CD4-positive, alpha-beta T cell (primary cell): ENCODE measurements at regions of chr12 and their contacts with region 1.

Region 1: GRCh38 chr12:122190842-122191668 is 8.1 kb downstream of the LRRC43 start:
- DNase-seq: peak; percentile 34 to 75 (median 56)
- ATAC-seq: peak; percentile 97
- H3K4me3 ChIP-seq: no peak overlapping the region
- H3K4me3 Mint-ChIP-seq: no peak overlapping the region
- H3K27ac ChIP-seq: no peak overlapping the region
- H3K27ac Mint-ChIP-seq: no peak overlapping the region
- H3K4me1 ChIP-seq: peaks cover 5% of the 10 kb centered on the region
- H3K4me1 Mint-ChIP-seq: no peaks in the 10 kb centered on the region
- H3K27me3 ChIP-seq: no peaks in the 10 kb centered on the region
- H3K27me3 Mint-ChIP-seq: peaks cover 5% of the 10 kb centered on the region
- CTCF ChIP-seq: peak; percentile 68

Region 2: GRCh38 chr12:121917979-121918678 is 272.9 kb before region 1 on chr12 and contains the start of gene CFAP251:
- CTCF ChIA-PET with region 1: interaction called, 3 read pairs
- POLR2A ChIA-PET with region 1: no interaction called
- intact Hi-C with region 1: loop called (anchors 2 to 5 kb)
- DNase-seq: peak; percentile 87 to 98 (median 95)
- ATAC-seq: peak; percentile 99
- H3K4me3 ChIP-seq: peak within 1 kb of the TSS; percentile 51
- H3K4me3 Mint-ChIP-seq: peak within 1 kb of the TSS; percentile 52
- H3K27ac ChIP-seq: peak within 1 kb of the TSS; percentile 48 to 69
- H3K27ac Mint-ChIP-seq: peak within 1 kb of the TSS; percentile 80
- H3K4me1 ChIP-seq: peaks cover 14% of the 10 kb centered on the region
- H3K4me1 Mint-ChIP-seq: peaks cover 8% of the 10 kb centered on the region
- H3K27me3 ChIP-seq: no peaks in the 10 kb centered on the region
- H3K27me3 Mint-ChIP-seq: no peaks in the 10 kb centered on the region
- CTCF ChIP-seq: peak; percentile 91
- total RNA-seq, gene CFAP251: 0.28 to 0.33 TPM

Region 3: GRCh38 chr12:122051231-122051876 is 139.7 kb before region 1 on chr12:
- CTCF ChIA-PET with region 1: interaction called, 10 read pairs
- POLR2A ChIA-PET with region 1: interaction called, 3 read pairs
- intact Hi-C with region 1: loop called (anchors 1 kb)
- DNase-seq: no peak
- ATAC-seq: no peak
- H3K4me3 ChIP-seq: no peak overlapping the region
- H3K4me3 Mint-ChIP-seq: no peak overlapping the region
- H3K27ac ChIP-seq: no peak overlapping the region
- H3K27ac Mint-ChIP-seq: no peak overlapping the region
- H3K4me1 ChIP-seq: peaks cover 9% of the 10 kb centered on the region
- H3K4me1 Mint-ChIP-seq: peaks cover 4% of the 10 kb centered on the region
- H3K27me3 ChIP-seq: no peaks in the 10 kb centered on the region
- H3K27me3 Mint-ChIP-seq: no peaks in the 10 kb centered on the region
- CTCF ChIP-seq: no peak

Region 4: DNA sequence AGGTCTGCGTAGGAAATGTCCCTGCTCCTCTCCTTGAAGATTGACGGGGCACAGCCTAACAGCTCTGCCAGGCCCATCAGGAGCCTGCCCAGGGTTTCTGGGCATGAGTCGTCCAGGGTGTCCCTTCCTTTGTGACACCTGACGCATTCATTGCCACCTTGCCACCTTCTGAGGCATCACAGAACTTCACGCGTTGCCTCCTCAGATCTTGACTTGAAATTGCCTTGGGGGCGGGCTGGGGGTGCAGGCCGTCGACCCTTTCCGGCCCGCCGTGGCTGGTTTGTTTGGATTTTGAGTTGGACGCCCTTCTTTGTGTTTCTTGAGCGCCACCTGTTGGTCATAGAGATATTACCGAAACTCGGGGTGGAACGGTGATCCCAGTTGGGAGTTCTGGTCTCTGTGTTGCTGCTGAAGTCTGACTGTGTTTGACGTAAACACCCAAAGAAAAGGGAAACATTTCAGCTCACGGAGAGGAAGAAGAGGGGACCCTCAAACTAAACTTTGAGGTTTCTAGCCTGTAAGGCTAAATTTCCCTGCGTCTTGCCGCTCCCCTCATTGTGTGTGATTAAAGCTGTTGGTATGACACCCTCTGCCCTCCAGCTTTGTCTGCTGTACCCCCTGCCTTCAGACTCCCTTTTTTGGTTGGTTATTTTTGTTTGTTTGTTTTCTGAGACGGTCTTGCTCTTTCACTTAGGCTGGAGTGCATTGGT is 67.8 kb before region 1 on chr12:
- CTCF ChIA-PET with region 1: interaction called, 6 read pairs
- POLR2A ChIA-PET with region 1: no interaction called
- intact Hi-C with region 1: loop called in 1 of 2 experiments (anchors 5 kb)
- DNase-seq: peak; percentile 53 to 84 (median 66)
- ATAC-seq: peak; percentile 79
- H3K4me3 ChIP-seq: no peak overlapping the region
- H3K4me3 Mint-ChIP-seq: peak overlapping the region; percentile 68
- H3K27ac ChIP-seq: no peak overlapping the region
- H3K27ac Mint-ChIP-seq: peak overlapping the region; percentile 69
- H3K4me1 ChIP-seq: peaks cover 19% of the 10 kb centered on the region
- H3K4me1 Mint-ChIP-seq: peaks cover 39% of the 10 kb centered on the region
- H3K27me3 ChIP-seq: no peaks in the 10 kb centered on the region
- H3K27me3 Mint-ChIP-seq: no peaks in the 10 kb centered on the region
- CTCF ChIP-seq: peak; percentile 95

Region 5: DNA sequence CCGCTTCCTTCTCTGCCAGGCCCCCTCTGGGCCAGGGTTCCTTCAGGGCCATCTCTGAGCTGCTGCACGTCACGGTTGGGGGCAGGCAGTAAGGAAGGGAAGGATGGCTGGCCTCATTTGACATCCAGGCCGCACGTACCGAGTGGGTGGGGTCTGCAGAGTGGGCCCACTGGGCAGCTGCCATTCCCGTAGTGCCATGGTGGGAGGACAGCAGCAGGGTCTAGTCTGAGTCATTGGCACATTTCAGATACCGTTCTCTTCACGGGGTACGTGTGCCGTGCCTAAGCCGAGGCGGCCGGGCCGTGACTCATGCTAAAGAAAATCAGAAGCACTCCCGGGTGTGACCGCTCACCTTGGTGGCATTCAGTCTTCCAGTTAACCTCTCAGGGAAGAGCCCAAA is 60.9 kb before region 1 on chr12:
- CTCF ChIA-PET with region 1: interaction called, 3 read pairs
- POLR2A ChIA-PET with region 1: no interaction called
- intact Hi-C with region 1: loop called (anchors 2 to 5 kb)
- DNase-seq: no peak
- ATAC-seq: no peak
- H3K4me3 ChIP-seq: no peak overlapping the region
- H3K4me3 Mint-ChIP-seq: no peak overlapping the region
- H3K27ac ChIP-seq: no peak overlapping the region
- H3K27ac Mint-ChIP-seq: no peak overlapping the region
- H3K4me1 ChIP-seq: no peaks in the 10 kb centered on the region
- H3K4me1 Mint-ChIP-seq: peaks cover 12% of the 10 kb centered on the region
- H3K27me3 ChIP-seq: no peaks in the 10 kb centered on the region
- H3K27me3 Mint-ChIP-seq: no peaks in the 10 kb centered on the region
- CTCF ChIP-seq: no peak

Region 6: DNA sequence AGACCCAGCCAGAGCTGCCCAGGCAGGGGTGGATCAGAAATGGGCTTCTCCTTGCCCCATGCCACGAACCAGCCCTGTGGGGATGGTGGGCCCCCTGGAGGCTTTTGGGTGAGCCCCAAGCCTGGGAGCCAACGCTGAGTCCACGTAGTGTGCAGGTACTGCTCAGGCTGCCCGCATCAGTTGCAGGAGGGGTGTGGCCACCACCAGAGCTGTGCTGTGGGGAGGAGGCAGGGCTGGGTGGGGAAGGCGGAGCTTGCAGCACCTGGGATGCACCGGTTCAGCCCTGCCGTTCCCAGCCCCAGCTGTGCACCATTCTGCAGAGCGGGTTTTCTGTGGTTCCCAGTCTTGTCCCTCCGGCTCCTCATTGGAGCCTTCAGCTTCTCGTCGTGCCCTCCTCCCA is 53.4 kb before region 1 on chr12:
- CTCF ChIA-PET with region 1: no interaction called
- POLR2A ChIA-PET with region 1: no interaction called
- intact Hi-C with region 1: loop called in 1 of 2 experiments (anchors 5 kb)
- DNase-seq: no peak
- ATAC-seq: peak; percentile 50
- H3K4me3 ChIP-seq: no peak overlapping the region
- H3K4me3 Mint-ChIP-seq: no peak overlapping the region
- H3K27ac ChIP-seq: no peak overlapping the region
- H3K27ac Mint-ChIP-seq: no peak overlapping the region
- H3K4me1 ChIP-seq: no peaks in the 10 kb centered on the region
- H3K4me1 Mint-ChIP-seq: no peaks in the 10 kb centered on the region
- H3K27me3 ChIP-seq: no peaks in the 10 kb centered on the region
- H3K27me3 Mint-ChIP-seq: no peaks in the 10 kb centered on the region
- CTCF ChIP-seq: no peak

Region 7: GRCh38 chr12:122166422-122167349 is 24.4 kb before region 1 on chr12:
- CTCF ChIA-PET with region 1: no interaction called
- POLR2A ChIA-PET with region 1: no interaction called
- intact Hi-C with region 1: no loop called
- DNase-seq: peak in 1 of 14 experiments; percentile 43
- ATAC-seq: no peak
- H3K4me3 ChIP-seq: no peak overlapping the region
- H3K4me3 Mint-ChIP-seq: no peak overlapping the region
- H3K27ac ChIP-seq: no peak overlapping the region
- H3K27ac Mint-ChIP-seq: no peak overlapping the region
- H3K4me1 ChIP-seq: peaks cover 4% of the 10 kb centered on the region
- H3K4me1 Mint-ChIP-seq: no peaks in the 10 kb centered on the region
- H3K27me3 ChIP-seq: no peaks in the 10 kb centered on the region
- H3K27me3 Mint-ChIP-seq: no peaks in the 10 kb centered on the region
- CTCF ChIP-seq: no peak